ENCODE measurements at regions of chr5 and their contacts with region 1.

Region 1: GRCh38 chr5:95646554-95647431 is at the start of gene RFESD:
- DNase-seq: peak; percentile 96
- H3K4me3 Mint-ChIP-seq: peak within 1 kb of the TSS; percentile 82
- H3K27ac Mint-ChIP-seq: peak within 1 kb of the TSS; percentile 83
- H3K4me1 Mint-ChIP-seq: peaks cover 34% of the 10 kb centered on the region
- H3K27me3 Mint-ChIP-seq: no peaks in the 10 kb centered on the region
- total RNA-seq, gene RFESD: 9.1 to 9.7 TPM

Region 2: GRCh38 chr5:95620030-95620869 is 26.5 kb before region 1 on chr5 and contains the start of gene GPR150:
- CTCF ChIA-PET with region 1: interaction called, 10 read pairs
- intact Hi-C with region 1: loop called (anchors 1 kb)
- DNase-seq: peak; percentile 69
- H3K4me3 Mint-ChIP-seq: peak within 1 kb of the TSS; percentile 82
- H3K27ac Mint-ChIP-seq: peak within 1 kb of the TSS; percentile 17
- H3K4me1 Mint-ChIP-seq: peaks cover 36% of the 10 kb centered on the region
- H3K27me3 Mint-ChIP-seq: no peaks in the 10 kb centered on the region
- total RNA-seq, gene GPR150: 0.64 to 0.94 TPM

Region 3: GRCh38 chr5:95718203-95718602 is 71.4 kb after region 1 on chr5:
- CTCF ChIA-PET with region 1: interaction called, 3 read pairs
- intact Hi-C with region 1: loop called (anchors 2 kb)
- DNase-seq: peak; percentile 60
- H3K4me3 Mint-ChIP-seq: no peak overlapping the region
- H3K27ac Mint-ChIP-seq: no peak overlapping the region
- H3K4me1 Mint-ChIP-seq: peaks cover 22% of the 10 kb centered on the region
- H3K27me3 Mint-ChIP-seq: peaks cover 11% of the 10 kb centered on the region

Region 4: GRCh38 chr5:95788493-95788892 is 141.7 kb after region 1 on chr5:
- CTCF ChIA-PET with region 1: no interaction called
- intact Hi-C with region 1: no loop called
- DNase-seq: no peak
- H3K4me3 Mint-ChIP-seq: no peak overlapping the region
- H3K27ac Mint-ChIP-seq: no peak overlapping the region
- H3K4me1 Mint-ChIP-seq: no peaks in the 10 kb centered on the region
- H3K27me3 Mint-ChIP-seq: no peaks in the 10 kb centered on the region

Region 5: DNA sequence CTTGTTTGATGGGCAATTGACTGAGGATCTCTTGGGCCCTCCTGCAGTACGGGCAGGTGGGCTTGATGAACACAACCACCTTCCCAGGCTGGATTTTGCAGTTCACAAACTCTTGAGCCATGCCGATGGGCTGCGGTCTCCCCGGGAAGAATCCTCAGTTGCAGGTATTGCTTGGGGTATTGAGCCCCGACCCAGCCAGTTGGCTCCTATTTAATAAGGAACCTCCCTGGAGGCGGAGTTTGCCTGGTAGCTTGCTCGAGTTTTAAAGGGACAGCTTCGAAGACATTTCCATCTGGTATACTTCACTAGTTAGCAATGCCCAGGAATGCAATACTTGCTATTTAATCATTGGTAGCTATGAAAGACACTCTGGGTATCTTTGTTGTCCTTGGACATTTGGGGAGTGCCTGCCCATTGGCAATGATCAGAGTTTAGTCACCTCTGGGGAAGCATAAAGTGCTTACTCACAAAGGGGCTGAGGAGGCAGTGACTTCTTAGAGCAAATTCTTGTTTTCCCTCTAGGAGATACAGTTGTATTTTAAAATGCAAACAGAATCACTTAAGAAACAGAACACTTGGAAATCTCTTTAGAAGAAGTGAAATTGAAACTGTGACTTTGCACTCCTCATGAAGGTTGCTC is 175.9 kb after region 1 on chr5 and contains the start of gene GLRX:
- CTCF ChIA-PET with region 1: interaction called, 5 read pairs
- intact Hi-C with region 1: loop called (anchors 1 kb)
- DNase-seq: peak; percentile 64
- H3K4me3 Mint-ChIP-seq: peak within 1 kb of the TSS; percentile 96
- H3K27ac Mint-ChIP-seq: peak within 1 kb of the TSS; percentile 98
- H3K4me1 Mint-ChIP-seq: peaks cover 61% of the 10 kb centered on the region
- H3K27me3 Mint-ChIP-seq: no peaks in the 10 kb centered on the region
- total RNA-seq, gene GLRX: 50.4 to 51.1 TPM

Region 6: GRCh38 chr5:95961617-95962474 is 315.1 kb after region 1 on chr5 and contains the start of gene ELL2:
- CTCF ChIA-PET with region 1: no interaction called
- intact Hi-C with region 1: loop called (anchors 1 kb)
- DNase-seq: peak; percentile 98
- H3K4me3 Mint-ChIP-seq: peak within 1 kb of the TSS; percentile 93
- H3K27ac Mint-ChIP-seq: peak within 1 kb of the TSS; percentile 89
- H3K4me1 Mint-ChIP-seq: peaks cover 40% of the 10 kb centered on the region
- H3K27me3 Mint-ChIP-seq: no peaks in the 10 kb centered on the region
- total RNA-seq, gene ELL2: 75.0 to 78.6 TPM

Region 7: DNA sequence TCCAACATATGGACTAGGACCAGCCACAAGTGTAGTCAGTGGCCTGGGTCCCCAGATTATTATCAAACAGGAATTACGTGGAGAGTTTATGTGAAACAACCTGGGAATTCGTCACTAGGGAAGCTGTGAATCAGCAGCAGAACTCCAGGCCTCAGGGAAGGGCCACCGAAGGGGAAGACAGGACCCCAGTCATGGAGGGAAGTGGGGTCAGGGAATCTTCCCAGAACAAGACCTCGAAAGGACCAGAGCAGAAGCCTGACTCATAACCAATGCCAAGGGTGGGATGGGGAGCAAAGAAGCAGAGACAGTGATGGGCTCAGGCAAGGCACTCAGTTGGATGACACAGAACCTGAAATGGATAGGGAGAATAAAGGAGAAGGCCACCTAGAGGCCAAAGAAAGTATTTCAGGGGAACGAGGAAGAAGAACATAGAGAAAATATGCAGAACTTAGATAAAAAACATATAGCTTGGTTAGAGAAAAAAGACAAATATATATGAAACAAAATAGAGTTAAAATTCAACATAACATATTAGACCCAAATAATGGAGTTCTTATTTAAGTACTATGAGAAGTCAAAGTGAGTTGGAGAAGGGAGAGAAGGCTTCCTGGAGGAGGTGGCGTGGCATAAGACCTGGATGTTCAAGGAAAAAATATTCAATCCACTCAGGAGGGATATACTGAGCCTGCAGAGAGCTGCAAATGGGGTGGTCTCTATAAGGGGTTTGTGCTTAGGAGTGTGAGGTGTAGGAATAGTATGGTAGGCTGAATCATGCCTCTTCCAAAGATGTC is 948.7 kb after region 1 on chr5:
- CTCF ChIA-PET with region 1: no interaction called
- intact Hi-C with region 1: loop called (anchors 5 kb)
- DNase-seq: peak; percentile 36
- H3K4me3 Mint-ChIP-seq: no peak overlapping the region
- H3K27ac Mint-ChIP-seq: no peak overlapping the region
- H3K4me1 Mint-ChIP-seq: peaks cover 10% of the 10 kb centered on the region
- H3K27me3 Mint-ChIP-seq: peaks cover under 1% of the 10 kb centered on the region

Region 8: GRCh38 chr5:97183100-97183929 is 1536.5 kb after region 1 on chr5 and contains the start of gene RIOK2:
- CTCF ChIA-PET with region 1: no interaction called
- intact Hi-C with region 1: loop called (anchors 5 kb)
- DNase-seq: peak; percentile 97
- H3K4me3 Mint-ChIP-seq: peak within 1 kb of the TSS; percentile 93
- H3K27ac Mint-ChIP-seq: peak within 1 kb of the TSS; percentile 99
- H3K4me1 Mint-ChIP-seq: peaks cover 33% of the 10 kb centered on the region
- H3K27me3 Mint-ChIP-seq: no peaks in the 10 kb centered on the region
- total RNA-seq, gene RIOK2: 29.1 to 32.0 TPM

Measured in activated naive CD4-positive, alpha-beta T cell treated with anti-CD3 and anti-CD28 coated beads for 36 hours (primary cell).